Activated CD8-positive, alpha-beta T cell treated with anti-CD3 and anti-CD28 coated beads, Interleukin-2, amount 10 ng/mL, durations not matched to agents 7 days and 5 days (primary cell): ENCODE measurements at regions of chr2 and their contacts with region 1.

Region 1: DNA sequence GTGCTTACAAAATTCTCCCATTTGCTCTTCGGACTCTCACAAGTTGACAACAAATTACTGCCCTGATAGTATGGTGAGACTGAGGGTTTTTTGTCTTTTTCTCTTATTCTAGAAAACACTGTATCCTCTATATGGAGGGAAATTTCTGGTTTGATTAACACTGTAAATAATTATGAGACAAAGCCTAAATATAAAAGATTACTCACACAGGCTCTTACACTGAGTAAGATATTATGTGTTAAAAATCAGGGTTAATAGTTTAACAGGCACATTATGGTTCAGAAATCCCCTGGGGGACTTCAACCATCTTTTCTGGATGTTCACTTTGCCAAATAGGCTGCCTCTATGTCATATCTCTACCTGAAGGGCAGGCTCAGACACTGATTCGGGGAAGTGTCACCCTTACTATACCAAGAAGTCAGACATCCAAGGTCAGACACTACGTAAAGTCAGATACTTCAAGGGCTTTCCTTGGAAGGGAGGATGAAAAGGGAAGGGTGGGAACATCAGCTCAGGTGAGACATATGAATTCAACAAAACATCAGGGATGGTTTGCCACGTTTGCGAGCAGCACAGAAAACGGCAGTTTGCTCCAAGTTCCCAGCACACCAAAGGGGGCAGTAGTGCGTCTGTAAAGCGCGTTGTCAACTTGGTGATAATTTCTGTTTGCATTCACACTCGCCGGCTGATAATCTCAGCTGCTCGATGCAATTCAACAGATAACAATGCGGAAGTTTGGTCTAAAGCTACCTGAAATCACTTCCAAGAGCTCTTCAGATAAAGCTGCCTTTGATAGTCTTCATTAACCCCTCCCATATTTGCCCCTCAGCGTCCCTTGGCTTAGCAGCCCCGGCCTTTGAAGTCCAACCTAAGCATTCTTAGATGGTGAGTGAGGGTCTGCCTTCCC is 972 bp upstream of the RASGRP3 start:
- DNase-seq: peak; percentile 91
- ATAC-seq: peak; percentile 78
- H3K4me3 Mint-ChIP-seq: peak overlapping the region; percentile 80
- H3K27ac Mint-ChIP-seq: peak overlapping the region; percentile 98
- H3K4me1 Mint-ChIP-seq: peaks cover 22% of the 10 kb centered on the region
- H3K27me3 Mint-ChIP-seq: no peaks in the 10 kb centered on the region

Region 2: DNA sequence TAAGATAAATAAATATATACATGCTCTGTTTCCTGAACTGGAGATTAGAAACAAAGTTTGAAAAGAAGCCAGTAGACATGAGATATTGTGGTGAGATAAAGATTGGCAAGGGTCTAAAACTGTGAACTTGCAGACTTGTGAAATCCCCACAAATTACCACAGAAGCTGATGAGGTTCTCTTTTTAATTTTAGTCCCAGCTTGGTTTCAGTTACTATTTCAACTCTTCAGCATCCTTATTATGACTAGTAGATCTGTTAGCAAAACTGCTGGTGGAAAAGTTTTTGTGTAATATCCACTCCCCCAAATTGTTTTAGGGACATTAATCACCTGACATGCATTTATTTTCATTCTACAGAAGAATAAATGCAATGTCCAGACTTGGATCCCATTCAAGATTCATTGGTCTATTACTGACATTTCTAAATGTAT is 21.8 kb after region 1 on chr2:
- CTCF ChIA-PET with region 1: interaction called, 34 read pairs
- POLR2A ChIA-PET with region 1: interaction called, 16 read pairs
- DNase-seq: no peak
- ATAC-seq: peak; percentile 66
- H3K4me3 Mint-ChIP-seq: no peak overlapping the region
- H3K27ac Mint-ChIP-seq: no peak overlapping the region
- H3K4me1 Mint-ChIP-seq: peaks cover 39% of the 10 kb centered on the region
- H3K27me3 Mint-ChIP-seq: peaks cover 2% of the 10 kb centered on the region

Region 3: DNA sequence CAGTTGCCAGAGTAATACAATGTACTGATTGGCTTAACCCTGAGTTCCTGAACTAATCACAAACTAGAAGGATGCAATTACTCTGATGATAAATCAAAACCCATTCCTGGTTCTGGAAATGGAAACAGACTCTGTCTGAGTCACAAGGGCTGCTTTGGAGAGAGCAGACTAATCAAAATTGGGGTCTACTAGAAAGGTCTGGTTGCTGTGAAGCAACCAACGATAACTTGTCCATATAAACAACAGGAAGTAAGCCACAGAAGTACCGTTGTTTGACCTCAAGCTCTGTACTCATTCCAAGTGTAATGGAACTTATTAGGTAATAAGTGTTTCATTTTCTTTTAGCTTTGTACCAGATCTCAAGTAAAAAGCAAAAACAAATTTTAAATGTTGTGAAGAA is 50.7 kb after region 1 on chr2:
- CTCF ChIA-PET with region 1: interaction called, 7 read pairs
- POLR2A ChIA-PET with region 1: interaction called, 11 read pairs
- DNase-seq: no peak
- ATAC-seq: peak; percentile 75
- H3K4me3 Mint-ChIP-seq: no peak overlapping the region
- H3K27ac Mint-ChIP-seq: no peak overlapping the region
- H3K4me1 Mint-ChIP-seq: peaks cover 15% of the 10 kb centered on the region
- H3K27me3 Mint-ChIP-seq: no peaks in the 10 kb centered on the region

Region 4: DNA sequence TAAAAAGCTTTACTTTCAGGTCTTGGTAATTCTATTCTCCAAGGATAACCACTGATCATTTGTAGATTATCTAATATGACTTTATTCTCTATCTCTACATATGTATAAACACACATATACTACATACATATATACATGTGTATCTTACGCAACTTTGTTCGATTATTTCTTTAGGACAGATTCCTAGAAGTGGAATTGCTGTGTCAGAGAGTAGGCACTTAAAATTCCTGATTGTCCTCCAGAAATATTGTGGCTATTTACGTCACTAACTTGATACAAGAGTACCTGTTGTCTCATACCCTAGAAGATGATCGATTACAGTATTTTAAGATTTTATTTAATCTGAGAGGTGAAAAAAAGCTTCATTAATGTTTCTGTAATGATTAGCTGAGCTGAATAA is 65.8 kb after region 1 on chr2:
- CTCF ChIA-PET with region 1: no interaction called
- POLR2A ChIA-PET with region 1: no interaction called
- DNase-seq: no peak
- ATAC-seq: no peak
- H3K4me3 Mint-ChIP-seq: no peak overlapping the region
- H3K27ac Mint-ChIP-seq: no peak overlapping the region
- H3K4me1 Mint-ChIP-seq: no peaks in the 10 kb centered on the region
- H3K27me3 Mint-ChIP-seq: no peaks in the 10 kb centered on the region

Region 5: DNA sequence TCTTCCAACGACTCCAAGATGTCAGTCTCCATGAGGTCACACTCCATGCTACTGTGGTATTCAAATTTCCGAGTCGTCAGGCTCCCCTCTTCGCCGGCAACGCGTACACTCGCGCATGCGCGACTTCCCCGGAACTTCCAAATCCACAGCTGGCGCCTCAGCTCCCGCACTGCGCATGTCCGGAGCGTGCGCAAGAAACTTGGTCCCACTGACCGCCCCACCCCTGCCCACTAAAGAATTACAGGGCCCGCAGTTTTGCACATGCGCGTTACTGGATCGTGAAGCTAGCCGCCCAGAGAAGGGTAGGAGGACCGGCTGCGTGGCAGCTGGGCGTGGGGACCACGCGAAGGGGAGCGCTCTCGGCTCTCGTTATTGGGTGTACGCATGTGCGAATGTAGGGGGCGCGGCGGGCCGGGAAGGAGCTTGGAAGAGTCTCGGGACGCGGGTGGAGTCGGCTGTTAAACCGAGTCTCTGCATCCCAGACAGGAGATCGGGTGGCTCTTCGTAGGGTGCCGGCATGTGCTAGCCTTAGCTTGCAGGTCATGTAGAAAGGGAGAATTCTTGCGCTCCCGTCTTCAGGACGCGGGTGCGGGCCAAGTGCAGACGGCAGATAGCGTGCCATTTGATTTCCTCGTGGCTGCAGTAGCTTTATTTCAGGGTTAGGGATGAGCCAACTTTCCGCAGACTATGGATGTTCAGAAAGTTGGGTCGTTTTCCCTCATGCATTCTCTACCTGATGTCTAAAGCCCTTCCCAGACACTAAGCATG is 123.9 kb after region 1 on chr2 and contains the start of gene FAM98A:
- CTCF ChIA-PET with region 1: interaction called, 19 read pairs
- POLR2A ChIA-PET with region 1: interaction called, 27 read pairs
- DNase-seq: peak; percentile 99
- ATAC-seq: peak; percentile 94
- H3K4me3 Mint-ChIP-seq: peak within 1 kb of the TSS; percentile 98
- H3K27ac Mint-ChIP-seq: peak within 1 kb of the TSS; percentile 96
- H3K4me1 Mint-ChIP-seq: peaks cover 22% of the 10 kb centered on the region
- H3K27me3 Mint-ChIP-seq: no peaks in the 10 kb centered on the region
- total RNA-seq, gene FAM98A: 33.4 to 33.9 TPM